Naive thymus-derived CD8-positive, alpha-beta T cell (primary cell): ENCODE measurements at regions of chr3 and their contacts with region 1.

Region 1: DNA sequence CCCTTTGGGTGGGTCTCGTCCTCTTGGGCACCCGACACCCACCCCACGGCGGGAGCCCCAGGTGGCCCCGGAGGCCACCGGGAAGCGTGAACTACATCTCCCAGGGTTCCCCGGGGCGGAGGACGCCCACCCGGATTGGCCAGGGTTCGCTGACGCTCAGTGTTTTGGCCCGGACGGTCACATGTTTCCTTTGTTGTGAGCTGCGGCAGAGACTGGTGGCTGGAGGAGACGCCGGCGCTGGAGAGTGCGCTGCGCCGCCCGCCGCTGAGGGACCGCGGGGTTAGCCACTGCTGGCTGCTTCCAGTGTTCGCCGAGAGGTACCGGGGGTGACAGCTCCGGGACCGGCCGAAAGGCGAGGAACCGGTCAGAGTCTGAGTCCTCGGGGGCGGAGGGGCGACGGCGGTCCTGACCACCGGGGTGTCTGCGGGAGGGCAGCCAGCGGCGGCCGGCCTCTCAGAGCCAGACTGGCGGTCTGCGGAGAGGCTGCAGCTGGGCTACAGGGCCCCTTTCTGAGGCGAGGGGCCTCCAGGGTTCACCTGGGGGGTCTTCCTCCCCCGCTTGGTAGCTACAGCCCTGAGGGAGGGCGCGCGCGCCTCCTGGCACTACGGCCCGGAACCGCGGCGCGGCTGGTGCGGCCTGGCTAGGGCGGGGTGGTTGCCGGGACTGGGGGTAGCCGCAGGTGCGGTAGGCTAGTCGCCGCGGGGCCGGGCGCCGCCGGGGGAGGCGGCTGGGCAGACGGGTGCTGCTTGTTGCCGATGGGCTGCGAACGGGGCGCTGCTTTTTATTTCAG is at the start of gene KLHL24:
- DNase-seq: peak; percentile 79 to 95 (median 88)
- ATAC-seq: peak; percentile 76 to 80
- H3K4me3 Mint-ChIP-seq: peak within 1 kb of the TSS; percentile 91 to 97 (median 95)
- H3K27ac Mint-ChIP-seq: peak within 1 kb of the TSS; percentile 89 to 99 (median 98)
- H3K4me1 Mint-ChIP-seq: peaks cover 14 to 47% (median 36%) of the 10 kb centered on the region in 4 donors
- H3K27me3 Mint-ChIP-seq: peaks cover 0 to 1% (median 0%) of the 10 kb centered on the region in 5 donors
- polyA plus RNA-seq, gene KLHL24: 42.4 to 46.3 (median 44.2) TPM

Region 2: GRCh38 chr3:183410280-183410679 is 225.3 kb before region 1 on chr3:
- POLR2A ChIA-PET with region 1: no interaction called
- DNase-seq: no peak
- ATAC-seq: no peak
- H3K4me3 Mint-ChIP-seq: no peak overlapping the region
- H3K27ac Mint-ChIP-seq: no peak overlapping the region
- H3K4me1 Mint-ChIP-seq: no peaks in the 10 kb centered on the region
- H3K27me3 Mint-ChIP-seq: peaks cover 0 to under 1% (median 0%) of the 10 kb centered on the region in 5 donors

Region 3: GRCh38 chr3:183515968-183516851 is 119.4 kb before region 1 on chr3:
- POLR2A ChIA-PET with region 1: interaction called, 41 read pairs
- DNase-seq: peak; percentile 25 to 88 (median 77)
- ATAC-seq: peak; percentile 74 to 83
- H3K4me3 Mint-ChIP-seq: peak overlapping the region; percentile 10 to 79 (median 68)
- H3K27ac Mint-ChIP-seq: peak overlapping the region; percentile 81 to 98 (median 94)
- H3K4me1 Mint-ChIP-seq: peaks cover 42 to 87% (median 81%) of the 10 kb centered on the region in 4 donors
- H3K27me3 Mint-ChIP-seq: no peaks in the 10 kb centered on the region

Region 4: DNA sequence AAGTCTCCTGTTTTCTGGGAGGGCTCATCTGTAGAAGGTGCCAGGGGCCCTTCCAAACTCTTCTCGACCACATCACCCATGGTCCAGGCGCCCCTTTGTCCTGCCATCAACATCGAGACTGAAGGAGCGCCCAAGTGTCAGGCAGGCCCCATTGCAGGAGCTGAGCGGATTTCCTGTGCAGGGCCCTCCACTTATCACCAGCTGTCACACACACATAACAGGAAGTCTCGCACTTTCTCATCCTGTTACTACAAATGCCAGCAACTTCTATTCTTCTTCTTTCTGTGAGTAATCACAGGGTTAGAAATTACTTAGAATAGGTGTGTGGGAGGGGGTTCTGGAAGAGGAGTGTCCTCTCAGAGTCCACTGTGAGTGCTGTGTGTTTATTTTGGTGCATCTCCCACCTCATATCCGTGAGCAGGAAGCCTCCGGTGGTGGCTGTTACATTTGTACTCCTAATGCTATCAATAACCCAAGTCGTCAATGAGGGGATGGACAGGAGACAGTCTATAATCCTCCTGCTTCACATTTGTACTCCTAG is 80.0 kb before region 1 on chr3 and contains the start of gene KLHL6:
- POLR2A ChIA-PET with region 1: interaction called, 11 read pairs
- DNase-seq: peak; percentile 41 to 80 (median 66)
- ATAC-seq: peak; percentile 93 to 95
- H3K4me3 Mint-ChIP-seq: peak within 1 kb of the TSS; percentile 90 to 100 (median 99)
- H3K27ac Mint-ChIP-seq: peak within 1 kb of the TSS; percentile 98 to 100 (median 99)
- H3K4me1 Mint-ChIP-seq: peaks cover 36 to 55% (median 53%) of the 10 kb centered on the region in 4 donors
- H3K27me3 Mint-ChIP-seq: no peaks in the 10 kb centered on the region
- polyA plus RNA-seq, gene KLHL6: 7.6 to 20.7 (median 18.6) TPM

Region 5: DNA sequence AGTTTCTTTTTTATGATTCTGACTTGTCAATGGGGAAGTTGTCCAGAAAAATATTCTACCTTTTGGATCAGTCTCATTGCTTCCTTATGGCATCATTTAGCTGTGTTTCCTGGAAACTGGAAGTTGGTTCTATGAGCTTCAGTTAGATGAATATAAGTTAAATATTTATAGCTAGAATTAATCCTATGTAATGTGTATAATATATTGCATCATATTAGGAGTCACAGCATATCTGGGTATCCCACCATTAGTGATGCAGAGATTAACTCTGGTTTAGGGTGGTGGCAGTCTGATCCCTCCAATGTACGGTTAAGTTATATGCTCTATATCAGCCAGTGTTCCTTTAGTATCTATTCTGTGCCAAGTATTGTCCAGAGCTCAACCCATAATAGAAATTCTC is 19.1 kb after region 1 on chr3:
- POLR2A ChIA-PET with region 1: interaction called, 10 read pairs
- DNase-seq: no peak
- ATAC-seq: no peak
- H3K4me3 Mint-ChIP-seq: peak overlapping the region in 1 of 10 donors; percentile 1
- H3K27ac Mint-ChIP-seq: no peak overlapping the region
- H3K4me1 Mint-ChIP-seq: peaks cover 14 to 30% (median 26%) of the 10 kb centered on the region in 4 donors
- H3K27me3 Mint-ChIP-seq: no peaks in the 10 kb centered on the region

Region 6: DNA sequence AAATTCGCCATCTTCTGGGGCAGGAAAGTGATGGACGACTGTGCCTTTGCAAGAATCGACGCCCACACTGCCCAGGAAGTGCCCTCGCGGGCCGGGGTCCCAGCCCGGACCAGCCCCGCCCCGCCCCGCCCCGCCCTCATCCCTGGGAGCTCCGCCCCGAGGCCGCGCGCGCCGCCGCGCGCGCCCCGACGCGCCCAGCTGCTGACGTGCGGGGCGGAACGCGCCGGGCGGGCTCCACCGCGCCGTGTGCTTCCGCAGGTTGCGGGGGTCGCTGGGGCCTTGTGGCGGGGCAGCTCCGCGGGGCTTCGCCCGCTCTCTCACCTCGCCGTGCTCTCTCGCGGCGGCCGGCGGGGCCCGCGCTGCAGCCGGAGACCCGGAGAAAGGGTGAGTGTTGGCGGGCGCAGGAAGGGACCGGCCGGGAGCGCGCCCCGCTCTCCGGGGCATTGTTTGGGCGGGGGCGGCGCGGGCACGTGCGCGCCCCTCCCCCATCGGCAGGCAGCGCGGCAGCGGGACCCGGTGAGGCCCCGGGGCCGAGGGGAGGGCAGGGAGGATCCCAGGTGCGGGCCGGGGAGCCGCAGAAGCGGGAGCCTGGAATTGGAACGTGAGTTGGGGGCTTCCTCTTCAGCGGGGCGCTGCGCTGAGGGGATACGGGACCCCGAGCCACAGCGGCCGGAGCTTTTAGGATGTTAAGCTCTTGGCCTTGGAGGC is 62.1 kb after region 1 on chr3 and contains the start of gene YEATS2:
- POLR2A ChIA-PET with region 1: interaction called, 42 read pairs
- DNase-seq: peak; percentile 46 to 80 (median 70)
- ATAC-seq: peak; percentile 85 to 87
- H3K4me3 Mint-ChIP-seq: peak within 1 kb of the TSS; percentile 88 to 99 (median 95)
- H3K27ac Mint-ChIP-seq: peak within 1 kb of the TSS; percentile 75 to 97 (median 94)
- H3K4me1 Mint-ChIP-seq: peaks cover 21 to 40% (median 36%) of the 10 kb centered on the region in 4 donors
- H3K27me3 Mint-ChIP-seq: no peaks in the 10 kb centered on the region
- polyA plus RNA-seq, gene YEATS2: 4.3 to 6.8 (median 4.9) TPM

Region 7: DNA sequence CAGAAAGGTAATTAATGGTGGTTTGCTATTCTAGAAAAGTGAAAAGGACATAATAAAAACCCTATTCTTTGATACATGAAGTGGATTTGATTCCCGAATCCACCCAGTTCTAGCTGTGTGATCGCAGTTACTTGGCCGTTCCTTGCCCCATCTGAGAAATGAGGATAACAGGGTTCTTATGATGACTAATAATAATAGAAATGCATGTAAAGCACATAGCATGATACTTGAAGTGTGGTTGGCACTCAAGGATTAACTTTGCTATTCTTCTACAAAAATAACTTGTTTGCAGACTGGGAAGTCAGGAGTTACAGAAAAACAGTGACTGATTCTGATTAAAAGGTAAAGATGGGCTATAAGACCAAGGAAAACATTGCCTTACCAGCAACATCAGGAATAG is 222.2 kb after region 1 on chr3:
- POLR2A ChIA-PET with region 1: no interaction called
- DNase-seq: no peak
- ATAC-seq: no peak
- H3K4me3 Mint-ChIP-seq: no peak overlapping the region
- H3K27ac Mint-ChIP-seq: peak overlapping the region in 2 of 10 donors; percentile 12 to 29
- H3K4me1 Mint-ChIP-seq: peaks cover 0 to 5% (median 2%) of the 10 kb centered on the region in 4 donors
- H3K27me3 Mint-ChIP-seq: no peaks in the 10 kb centered on the region